A673 (cell line): ENCODE measurements at regions of chr15 and their contacts with region 1.

Region 1: GRCh38 chr15:44426975-44427755 is at the start of gene CTDSPL2:
- DNase-seq: peak; percentile 100
- H3K4me3 ChIP-seq: peak within 1 kb of the TSS; percentile 93
- H3K27ac ChIP-seq: peak within 1 kb of the TSS; percentile 98
- H3K4me1 ChIP-seq: peaks cover 3% of the 10 kb centered on the region
- H3K27me3 ChIP-seq: no peaks in the 10 kb centered on the region
- CTCF ChIP-seq: peak; percentile 53
- total RNA-seq, gene CTDSPL2: 98.6 and 99.7 TPM in 2 replicates

Region 2: DNA sequence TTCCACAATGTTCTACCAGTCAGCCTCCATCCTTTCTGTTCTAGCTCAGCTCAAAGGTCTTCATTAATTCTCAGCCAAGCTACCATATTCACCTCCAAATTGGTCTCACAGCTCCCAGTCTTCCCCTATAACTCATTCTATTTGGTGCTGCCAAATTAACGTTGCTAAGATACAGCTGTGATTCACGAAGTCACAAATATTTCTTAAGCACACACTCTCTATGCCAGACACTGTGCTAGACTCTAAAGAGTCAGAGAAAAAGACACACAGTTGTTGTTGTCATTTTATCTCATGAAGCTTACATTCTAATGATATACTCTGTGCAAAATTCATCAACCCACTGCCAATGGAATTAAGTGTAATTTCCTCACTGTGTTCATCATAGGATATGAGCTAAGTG is 334.9 kb before region 1 on chr15:
- CTCF ChIA-PET with region 1: no interaction called
- POLR2A ChIA-PET with region 1: no interaction called
- intact Hi-C with region 1: no loop called
- DNase-seq: peak; percentile 11
- H3K4me3 ChIP-seq: no peak overlapping the region
- H3K27ac ChIP-seq: no peak overlapping the region
- H3K4me1 ChIP-seq: no peaks in the 10 kb centered on the region
- H3K27me3 ChIP-seq: no peaks in the 10 kb centered on the region
- CTCF ChIP-seq: no peak

Region 3: GRCh38 chr15:44286814-44287452 is 140.2 kb before region 1 on chr15:
- CTCF ChIA-PET with region 1: no interaction called
- POLR2A ChIA-PET with region 1: interaction called, 4 read pairs
- intact Hi-C with region 1: loop called (anchors 5 kb)
- DNase-seq: peak; percentile 19
- H3K4me3 ChIP-seq: peak overlapping the region; percentile 99
- H3K27ac ChIP-seq: no peak overlapping the region
- H3K4me1 ChIP-seq: peaks cover 11% of the 10 kb centered on the region
- H3K27me3 ChIP-seq: no peaks in the 10 kb centered on the region
- CTCF ChIP-seq: no peak

Region 4: DNA sequence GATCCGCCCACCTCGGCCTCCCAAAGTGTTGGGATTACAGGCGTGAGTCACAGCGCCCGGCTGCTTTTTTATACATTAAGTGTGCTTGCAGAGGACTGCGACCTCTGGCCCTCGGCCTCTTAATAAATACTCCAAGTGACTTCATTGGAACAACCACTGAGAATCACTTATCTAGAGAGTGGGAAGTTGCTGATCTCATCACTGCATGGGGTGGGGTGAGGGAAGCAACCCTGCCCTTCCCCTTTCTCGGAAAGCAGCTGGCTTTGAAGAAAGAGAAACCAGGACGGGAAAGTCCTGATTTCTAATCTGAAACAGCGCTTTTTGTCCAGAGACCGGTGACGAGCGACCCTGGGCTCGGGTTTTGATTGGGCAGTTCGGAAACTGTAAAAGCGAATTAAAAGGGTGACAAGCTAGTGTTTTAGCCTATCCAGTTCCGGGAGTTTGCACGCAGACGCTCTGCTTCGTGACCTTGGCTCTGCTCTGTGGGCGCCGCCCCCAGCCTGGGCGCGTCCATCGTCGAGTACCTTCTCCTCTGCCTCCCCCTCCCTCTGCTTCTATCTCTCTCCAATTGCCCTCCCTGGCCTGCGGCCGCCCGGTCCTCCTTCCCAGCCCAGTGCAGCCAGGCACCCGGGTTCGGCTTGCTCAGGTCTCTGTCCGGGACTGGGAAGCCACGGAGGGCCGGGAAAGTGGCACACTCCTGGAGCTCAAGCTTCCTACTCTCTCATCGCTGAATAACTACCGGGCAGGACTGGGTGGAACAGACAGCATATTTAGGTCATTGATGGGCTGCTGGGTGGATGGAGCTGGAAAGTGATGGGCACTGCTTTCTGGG is 301.6 kb after region 1 on chr15:
- CTCF ChIA-PET with region 1: no interaction called
- POLR2A ChIA-PET with region 1: no interaction called
- intact Hi-C with region 1: loop called (anchors 10 kb)
- DNase-seq: peak; percentile 99
- H3K4me3 ChIP-seq: peak overlapping the region; percentile 81
- H3K27ac ChIP-seq: peak overlapping the region; percentile 95
- H3K4me1 ChIP-seq: peaks cover 42% of the 10 kb centered on the region
- H3K27me3 ChIP-seq: no peaks in the 10 kb centered on the region
- CTCF ChIP-seq: no peak